A673 (cell line): ENCODE measurements at regions of chr15 and their contacts with region 1.

Region 1: GRCh38 chr15:74768771-74769342 is 13.0 kb upstream of the CSK start:
- DNase-seq: peak; percentile 78
- H3K4me3 ChIP-seq: no peak overlapping the region
- H3K27ac ChIP-seq: no peak overlapping the region
- H3K4me1 ChIP-seq: peaks cover 10% of the 10 kb centered on the region
- H3K27me3 ChIP-seq: no peaks in the 10 kb centered on the region
- CTCF ChIP-seq: peak; percentile 89

Region 2: DNA sequence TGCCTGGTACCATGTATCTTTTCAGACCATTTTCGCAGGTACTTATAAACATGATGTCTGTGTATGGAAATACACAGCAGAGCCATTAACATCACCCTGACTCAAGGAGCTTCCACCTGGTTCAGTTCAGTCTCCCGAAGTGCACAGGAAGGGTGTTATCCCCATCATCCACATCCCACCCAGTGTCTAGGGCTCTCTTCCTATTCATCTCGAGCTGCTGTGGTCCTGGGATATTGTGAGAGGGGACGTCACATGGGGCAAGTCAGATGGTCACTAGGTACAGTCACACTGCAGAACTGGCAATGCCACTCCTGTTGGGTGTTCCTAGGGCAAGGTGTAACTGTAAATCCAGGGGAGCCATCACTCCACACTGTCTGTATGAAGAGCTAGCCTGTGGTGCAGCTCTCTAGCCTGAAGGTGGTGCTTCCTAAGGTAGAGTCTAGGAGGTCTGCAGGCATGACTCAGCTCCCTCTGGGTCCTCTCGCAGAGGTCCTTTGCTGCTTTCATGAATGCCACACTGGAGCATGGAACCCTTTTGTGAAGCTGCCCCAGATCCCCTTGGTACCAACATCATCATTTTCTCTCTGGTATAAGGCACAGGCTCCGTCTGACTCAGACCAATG is 624.6 kb before region 1 on chr15:
- CTCF ChIA-PET with region 1: no interaction called
- POLR2A ChIA-PET with region 1: no interaction called
- intact Hi-C with region 1: no loop called
- DNase-seq: no peak
- H3K4me3 ChIP-seq: no peak overlapping the region
- H3K27ac ChIP-seq: no peak overlapping the region
- H3K4me1 ChIP-seq: no peaks in the 10 kb centered on the region
- H3K27me3 ChIP-seq: no peaks in the 10 kb centered on the region
- CTCF ChIP-seq: no peak

Region 3: DNA sequence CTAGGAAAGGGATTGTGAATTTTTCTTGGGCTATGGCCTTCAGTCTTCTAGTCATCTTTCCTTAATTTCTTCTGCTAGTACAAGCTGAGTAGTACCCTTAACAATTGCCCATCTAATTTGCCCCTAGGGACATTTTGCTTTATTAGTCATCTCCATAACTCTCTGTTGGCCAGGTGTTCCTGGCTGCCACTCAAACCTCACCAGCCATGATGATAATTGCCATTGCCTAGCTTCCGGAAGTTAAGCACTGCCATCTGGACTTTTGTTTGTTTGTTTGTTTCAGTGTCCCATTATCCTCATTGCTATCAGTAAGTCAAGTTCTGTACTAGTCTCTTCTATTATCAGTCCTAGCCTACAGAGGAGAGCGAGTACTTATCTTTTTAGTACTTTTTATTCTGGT is 271.3 kb before region 1 on chr15:
- CTCF ChIA-PET with region 1: no interaction called
- POLR2A ChIA-PET with region 1: no interaction called
- intact Hi-C with region 1: no loop called
- DNase-seq: peak; percentile 39
- H3K4me3 ChIP-seq: no peak overlapping the region
- H3K27ac ChIP-seq: no peak overlapping the region
- H3K4me1 ChIP-seq: no peaks in the 10 kb centered on the region
- H3K27me3 ChIP-seq: no peaks in the 10 kb centered on the region
- CTCF ChIP-seq: no peak

Region 4: DNA sequence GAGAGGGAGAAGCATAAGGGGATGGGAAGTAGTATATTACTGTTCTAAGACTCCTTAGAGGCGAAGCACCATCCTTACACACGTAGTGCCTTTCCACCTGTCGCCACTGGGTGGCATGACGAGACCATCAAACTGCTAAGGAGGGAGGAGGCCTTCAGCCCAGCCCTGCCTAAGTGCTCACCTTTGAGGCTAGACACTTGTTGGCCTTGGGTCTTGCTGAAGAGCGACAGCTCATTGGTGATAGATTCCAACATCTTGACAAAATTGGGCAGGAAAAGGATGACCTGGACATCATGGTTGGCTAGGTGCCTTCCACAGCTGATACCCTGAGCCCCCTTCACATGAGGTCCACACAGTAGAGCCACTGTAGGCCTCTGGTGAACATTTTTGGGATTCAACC is 133.6 kb before region 1 on chr15:
- CTCF ChIA-PET with region 1: interaction called, 119 read pairs
- POLR2A ChIA-PET with region 1: interaction called, 5 read pairs
- intact Hi-C with region 1: loop called (anchors 1 kb)
- DNase-seq: peak; percentile 78
- H3K4me3 ChIP-seq: no peak overlapping the region
- H3K27ac ChIP-seq: no peak overlapping the region
- H3K4me1 ChIP-seq: no peaks in the 10 kb centered on the region
- H3K27me3 ChIP-seq: no peaks in the 10 kb centered on the region
- CTCF ChIP-seq: peak; percentile 92

Region 5: GRCh38 chr15:74787251-74788041 is 18.6 kb after region 1 on chr15:
- CTCF ChIA-PET with region 1: interaction called, 10 read pairs
- POLR2A ChIA-PET with region 1: no interaction called
- intact Hi-C with region 1: no loop called
- DNase-seq: peak; percentile 88
- H3K4me3 ChIP-seq: no peak overlapping the region
- H3K27ac ChIP-seq: peak overlapping the region; percentile 44
- H3K4me1 ChIP-seq: peaks cover 66% of the 10 kb centered on the region
- H3K27me3 ChIP-seq: no peaks in the 10 kb centered on the region
- CTCF ChIP-seq: peak; percentile 86

Region 6: GRCh38 chr15:74835307-74835823 is 66.5 kb after region 1 on chr15:
- CTCF ChIA-PET with region 1: interaction called, 7 read pairs
- POLR2A ChIA-PET with region 1: no interaction called
- intact Hi-C with region 1: loop called (anchors 5 kb)
- DNase-seq: peak; percentile 77
- H3K4me3 ChIP-seq: no peak overlapping the region
- H3K27ac ChIP-seq: no peak overlapping the region
- H3K4me1 ChIP-seq: no peaks in the 10 kb centered on the region
- H3K27me3 ChIP-seq: no peaks in the 10 kb centered on the region
- CTCF ChIP-seq: peak; percentile 87

Region 7: DNA sequence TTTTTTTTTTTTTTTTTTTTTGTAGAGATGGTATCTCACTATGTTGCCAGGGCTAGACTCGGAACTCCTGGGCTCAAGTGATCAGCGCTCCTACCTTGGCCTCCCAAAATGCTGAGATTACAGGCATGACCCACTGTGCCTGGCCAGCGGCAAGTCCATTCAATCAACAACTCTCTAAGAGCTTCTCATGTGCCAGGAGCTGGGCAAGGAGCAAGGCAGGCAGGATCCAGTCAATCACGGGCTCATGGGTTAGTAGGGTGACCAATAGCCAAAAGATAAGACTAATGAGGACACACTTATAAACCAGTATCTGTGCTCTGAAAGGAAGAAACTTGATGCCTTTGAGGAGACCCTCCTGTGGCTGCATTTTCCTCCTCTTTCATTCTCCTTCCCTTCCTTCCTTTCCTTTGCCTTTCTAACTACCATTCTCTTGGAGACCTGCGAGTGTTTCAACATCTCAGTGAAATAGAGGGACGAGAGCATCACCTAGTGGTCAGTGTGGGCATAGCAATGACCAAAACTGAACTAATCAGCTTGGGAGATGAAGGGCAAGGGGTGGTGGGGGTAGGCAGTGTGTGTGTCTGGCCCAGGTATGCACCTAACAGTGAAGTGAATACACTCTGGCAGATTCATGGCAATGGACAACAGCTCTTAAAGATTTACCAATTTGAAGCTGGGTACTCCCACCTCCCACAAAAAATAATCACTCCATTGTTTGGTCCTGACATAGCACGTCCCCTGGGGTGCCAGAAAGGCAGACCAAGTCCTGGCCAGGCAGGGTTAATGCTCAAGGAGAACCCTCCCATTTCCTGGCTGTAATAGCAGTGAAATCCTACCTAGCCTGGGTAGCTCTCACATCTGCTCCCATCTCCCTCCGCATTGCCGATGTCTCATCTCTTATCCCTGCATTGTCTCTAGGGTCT is 181.5 kb after region 1 on chr15:
- CTCF ChIA-PET with region 1: interaction called, 21 read pairs
- POLR2A ChIA-PET with region 1: no interaction called
- intact Hi-C with region 1: loop called (anchors 1 kb)
- DNase-seq: peak; percentile 86
- H3K4me3 ChIP-seq: no peak overlapping the region
- H3K27ac ChIP-seq: no peak overlapping the region
- H3K4me1 ChIP-seq: peaks cover 17% of the 10 kb centered on the region
- H3K27me3 ChIP-seq: no peaks in the 10 kb centered on the region
- CTCF ChIP-seq: peak; percentile 99